Endothelial cell of umbilical vein (primary cell): ENCODE measurements at regions of chr1 and their contacts with region 1.

Region 1: DNA sequence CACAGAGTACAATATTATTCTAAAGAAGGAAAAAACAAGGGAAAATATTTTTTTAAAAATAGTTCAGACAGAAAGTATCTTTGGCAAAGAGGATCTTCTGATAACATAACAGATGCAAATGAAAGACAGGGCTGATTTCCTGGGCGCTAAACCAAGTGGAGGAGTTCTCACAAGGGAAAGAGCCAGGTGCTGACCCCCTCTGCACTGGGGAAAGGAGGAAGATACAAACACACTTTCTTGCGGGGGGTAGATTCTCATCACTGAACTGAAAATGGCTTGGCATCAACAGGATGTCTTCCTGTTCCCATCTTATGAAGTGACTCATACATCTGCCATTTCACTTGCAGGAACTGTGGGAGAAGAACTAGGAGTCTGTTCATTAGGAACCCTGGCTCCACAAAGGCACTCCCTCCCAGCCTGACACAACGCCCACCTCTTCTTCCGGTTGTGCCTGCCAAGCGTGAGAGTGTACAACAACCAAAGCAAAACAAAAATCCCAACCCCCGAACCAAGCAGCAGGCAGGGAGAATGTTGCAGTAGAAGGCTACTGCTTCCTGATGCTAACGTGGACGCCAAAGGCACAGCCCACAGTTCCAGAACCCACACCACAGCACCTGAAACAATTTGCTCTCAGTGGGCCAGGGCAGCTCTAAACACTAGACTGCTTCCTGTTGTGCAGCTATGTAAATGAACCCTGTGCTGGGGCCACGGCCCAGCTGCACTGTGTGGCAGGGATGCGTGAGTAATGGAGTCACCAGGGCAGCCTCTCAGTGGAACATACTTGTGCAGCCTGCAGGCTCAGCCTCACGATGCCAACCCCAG is 51.0 kb downstream of the GADD45A start:
- DNase-seq: peak; percentile 98
- H3K4me3 ChIP-seq: peak overlapping the region in 1 of 3 experiments; percentile 25
- H3K27ac ChIP-seq: peak overlapping the region; percentile 89
- H3K4me1 ChIP-seq: peaks cover 38% of the 10 kb centered on the region
- H3K27me3 ChIP-seq: no peaks in the 10 kb centered on the region
- CTCF ChIP-seq: no peak
- POLR2A ChIP-seq: no peak

Region 2: GRCh38 chr1:67561704-67562113 is 174.3 kb before region 1 on chr1:
- CTCF ChIA-PET with region 1: interaction called, 3 read pairs
- POLR2A ChIA-PET with region 1: no interaction called
- dilution Hi-C with region 1: no loop called
- intact Hi-C with region 1: loop called (anchors 1 kb)
- DNase-seq: peak; percentile 92
- H3K4me3 ChIP-seq: no peak overlapping the region
- H3K27ac ChIP-seq: no peak overlapping the region
- H3K4me1 ChIP-seq: peaks cover 11% of the 10 kb centered on the region
- H3K27me3 ChIP-seq: no peaks in the 10 kb centered on the region
- CTCF ChIP-seq: peak; percentile 85
- POLR2A ChIP-seq: no peak

Region 3: DNA sequence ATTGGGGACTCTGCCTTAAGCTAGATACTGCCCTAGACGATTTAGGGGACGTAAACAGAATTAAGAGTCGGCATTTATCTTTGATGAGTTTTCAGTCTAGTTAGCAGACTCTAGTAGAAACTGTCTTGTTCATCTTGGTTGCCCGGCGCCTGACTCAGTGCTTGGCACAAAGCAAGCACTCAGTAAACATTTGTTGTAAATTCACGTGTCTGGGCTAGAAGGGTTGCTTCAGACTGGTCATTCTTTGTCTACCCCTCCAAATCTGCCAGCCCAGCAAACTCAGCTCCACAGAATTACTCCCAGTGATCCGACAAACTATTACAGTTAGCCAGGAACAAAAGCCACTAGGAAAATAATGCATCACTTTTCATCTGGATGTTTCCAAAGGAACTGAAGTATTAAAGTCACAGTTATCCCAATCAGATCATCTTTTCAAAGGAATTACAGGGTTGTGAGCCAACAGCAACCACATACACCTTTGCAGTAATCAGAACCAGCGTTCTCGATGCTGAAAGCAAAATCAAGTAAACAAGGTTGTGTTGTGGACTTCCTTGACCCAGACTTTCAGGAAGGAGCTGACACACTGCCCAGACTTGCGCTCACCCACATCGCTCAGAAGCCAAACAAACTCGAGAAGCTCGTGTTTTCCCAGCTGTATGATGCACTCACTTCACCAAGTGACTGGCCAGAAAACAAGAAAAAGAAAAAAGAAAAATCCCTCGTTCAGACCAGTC is 117.6 kb before region 1 on chr1:
- CTCF ChIA-PET with region 1: no interaction called
- POLR2A ChIA-PET with region 1: no interaction called
- dilution Hi-C with region 1: no loop called
- intact Hi-C with region 1: no loop called
- DNase-seq: peak; percentile 99
- H3K4me3 ChIP-seq: no peak overlapping the region
- H3K27ac ChIP-seq: peak overlapping the region; percentile 92
- H3K4me1 ChIP-seq: peaks cover 24% of the 10 kb centered on the region
- H3K27me3 ChIP-seq: no peaks in the 10 kb centered on the region
- CTCF ChIP-seq: no peak
- POLR2A ChIP-seq: peak; percentile 41

Region 4: DNA sequence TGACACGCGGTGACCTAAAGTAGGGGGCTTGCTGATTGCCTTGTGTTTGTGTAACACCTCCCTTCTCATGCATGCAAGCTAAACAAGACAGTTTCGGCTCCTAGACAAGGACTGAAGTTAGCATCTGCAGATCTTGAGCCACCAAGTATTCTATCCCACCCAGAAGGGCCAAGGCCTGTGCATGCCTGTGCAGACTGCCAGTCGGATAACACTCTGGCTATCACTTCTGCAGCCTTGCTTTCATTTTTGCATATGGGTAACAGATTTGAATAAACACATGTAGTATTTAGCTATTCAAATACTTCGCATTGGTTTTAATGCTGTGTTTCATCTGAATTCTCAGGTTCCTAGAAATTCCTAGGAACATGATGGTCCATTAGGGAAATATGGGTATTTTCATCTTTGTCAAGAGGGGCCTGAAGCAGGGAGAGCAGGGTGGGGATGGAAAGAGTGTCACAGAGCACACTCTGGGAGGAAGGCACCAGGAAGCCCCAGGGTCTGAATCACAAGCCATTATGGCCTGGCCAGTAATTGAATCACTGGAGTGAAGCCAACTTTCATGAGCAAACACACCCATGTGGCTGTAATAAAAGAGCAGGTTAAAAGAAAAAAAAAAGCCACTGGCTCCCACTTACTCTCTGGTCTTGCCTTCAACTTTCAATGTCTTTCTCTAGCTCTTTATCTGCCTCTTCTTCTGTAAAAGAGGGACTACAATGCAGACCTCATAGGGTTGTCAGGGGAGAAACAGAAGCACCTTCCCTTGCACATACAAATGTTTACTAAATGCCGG is 22.8 kb before region 1 on chr1:
- CTCF ChIA-PET with region 1: no interaction called
- POLR2A ChIA-PET with region 1: no interaction called
- dilution Hi-C with region 1: no loop called
- intact Hi-C with region 1: loop called (anchors 1 kb)
- DNase-seq: peak; percentile 92
- H3K4me3 ChIP-seq: no peak overlapping the region
- H3K27ac ChIP-seq: peak overlapping the region; percentile 64
- H3K4me1 ChIP-seq: peaks cover 45% of the 10 kb centered on the region
- H3K27me3 ChIP-seq: no peaks in the 10 kb centered on the region
- CTCF ChIP-seq: no peak
- POLR2A ChIP-seq: no peak

Region 5: GRCh38 chr1:67723620-67724019 is 12.4 kb before region 1 on chr1:
- CTCF ChIA-PET with region 1: interaction called, 6 read pairs
- POLR2A ChIA-PET with region 1: no interaction called
- dilution Hi-C with region 1: no loop called
- intact Hi-C with region 1: loop called (anchors 1 kb)
- DNase-seq: peak; percentile 97
- H3K4me3 ChIP-seq: peak overlapping the region in 1 of 3 experiments; percentile 17
- H3K27ac ChIP-seq: peak overlapping the region; percentile 95
- H3K4me1 ChIP-seq: peaks cover 68% of the 10 kb centered on the region
- H3K27me3 ChIP-seq: no peaks in the 10 kb centered on the region
- CTCF ChIP-seq: no peak
- POLR2A ChIP-seq: peak; percentile 40

Region 6: GRCh38 chr1:67814121-67814772 is 78.2 kb after region 1 on chr1:
- CTCF ChIA-PET with region 1: no interaction called
- POLR2A ChIA-PET with region 1: no interaction called
- dilution Hi-C with region 1: no loop called
- intact Hi-C with region 1: no loop called
- DNase-seq: peak; percentile 72
- H3K4me3 ChIP-seq: no peak overlapping the region
- H3K27ac ChIP-seq: peak overlapping the region; percentile 36
- H3K4me1 ChIP-seq: peaks cover 56% of the 10 kb centered on the region
- H3K27me3 ChIP-seq: no peaks in the 10 kb centered on the region
- CTCF ChIP-seq: no peak
- POLR2A ChIP-seq: no peak